PC-9 (cell line): ENCODE measurements at regions of chr11 and their contacts with region 1.

Region 1: GRCh38 chr11:65329944-65330403 is 3.7 kb upstream of the DPF2 start:
- DNase-seq: peak; percentile 75 to 80
- H3K4me3 ChIP-seq: peak overlapping the region; percentile 4; the same call in 1 of the 2 replicates
- H3K27ac ChIP-seq: peak overlapping the region; percentile 26; the same call in 1 of the 2 replicates
- H3K4me1 ChIP-seq: peaks cover 13% of the 10 kb centered on the region
- H3K27me3 ChIP-seq: no peaks in the 10 kb centered on the region
- CTCF ChIP-seq: peak; percentile 94

Region 2: DNA sequence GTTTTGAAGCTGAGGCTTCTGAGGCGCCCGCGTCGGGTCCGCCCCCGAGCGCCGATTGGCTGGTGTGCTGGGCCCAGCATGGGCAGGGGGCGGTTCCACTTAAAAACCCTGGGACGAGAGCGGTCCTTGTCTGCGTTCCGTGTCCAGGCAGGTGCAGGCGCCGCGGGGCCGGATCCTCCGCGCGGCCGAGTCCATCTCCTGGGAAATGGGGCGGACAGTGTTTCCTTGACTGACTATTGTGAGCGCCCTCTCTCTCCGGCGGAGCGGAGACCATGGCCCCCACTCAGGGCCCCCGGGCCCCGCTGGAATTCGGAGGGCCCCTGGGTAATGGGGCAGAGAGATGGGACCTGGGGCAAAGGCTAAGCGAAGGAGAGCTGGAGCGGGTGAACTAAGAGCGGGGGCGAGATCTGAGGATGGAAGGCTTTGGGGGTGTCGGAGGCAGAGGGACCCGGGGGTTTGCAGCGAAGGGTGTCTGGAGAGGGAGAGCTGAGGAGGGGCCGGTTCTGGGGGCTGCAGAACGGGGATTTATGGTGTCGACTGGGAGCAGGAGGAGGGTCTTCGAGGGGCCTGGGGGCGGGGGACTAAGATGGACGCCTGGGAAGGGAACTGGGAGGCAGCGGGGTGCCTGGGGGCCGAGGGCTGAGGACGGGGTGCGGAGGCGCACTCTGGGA is 218.1 kb before region 1 on chr11 and contains the start of gene TM7SF2:
- CTCF ChIA-PET with region 1: no interaction called
- POLR2A ChIA-PET with region 1: no interaction called
- intact Hi-C with region 1: loop called (anchors 5 kb)
- DNase-seq: peak; percentile 92 to 97
- H3K4me3 ChIP-seq: peak within 1 kb of the TSS; percentile 78
- H3K27ac ChIP-seq: no peak within 1 kb of the TSS
- H3K4me1 ChIP-seq: peaks cover 40% of the 10 kb centered on the region
- H3K27me3 ChIP-seq: no peaks in the 10 kb centered on the region
- CTCF ChIP-seq: no peak
- total RNA-seq, gene TM7SF2: 49.5 and 72.3 TPM in 2 replicates

Region 3: GRCh38 chr11:65215441-65216076 is 114.4 kb before region 1 on chr11:
- CTCF ChIA-PET with region 1: interaction called, 12 read pairs
- POLR2A ChIA-PET with region 1: interaction called, 5 read pairs
- intact Hi-C with region 1: no loop called
- DNase-seq: peak in 1 of 2 experiments; percentile 71
- H3K4me3 ChIP-seq: peak overlapping the region; percentile 74
- H3K27ac ChIP-seq: no peak overlapping the region
- H3K4me1 ChIP-seq: peaks cover 45% of the 10 kb centered on the region
- H3K27me3 ChIP-seq: no peaks in the 10 kb centered on the region
- CTCF ChIP-seq: no peak

Region 4: GRCh38 chr11:65290448-65291165 is 39.4 kb before region 1 on chr11:
- CTCF ChIA-PET with region 1: interaction called, 3 read pairs
- POLR2A ChIA-PET with region 1: interaction called, 10 read pairs
- intact Hi-C with region 1: no loop called
- DNase-seq: peak; percentile 32 to 52
- H3K4me3 ChIP-seq: no peak overlapping the region
- H3K27ac ChIP-seq: peak overlapping the region; percentile 92
- H3K4me1 ChIP-seq: peaks cover 34% of the 10 kb centered on the region
- H3K27me3 ChIP-seq: no peaks in the 10 kb centered on the region
- CTCF ChIP-seq: no peak

Region 5: GRCh38 chr11:65354265-65355012 is 24.5 kb after region 1 on chr11 and contains the start of gene TIGD3:
- CTCF ChIA-PET with region 1: interaction called, 3 read pairs
- POLR2A ChIA-PET with region 1: interaction called, 23 read pairs
- intact Hi-C with region 1: no loop called
- DNase-seq: peak; percentile 88 to 99
- H3K4me3 ChIP-seq: peak within 1 kb of the TSS; percentile 87
- H3K27ac ChIP-seq: no peak within 1 kb of the TSS
- H3K4me1 ChIP-seq: peaks cover 11% of the 10 kb centered on the region
- H3K27me3 ChIP-seq: no peaks in the 10 kb centered on the region
- CTCF ChIP-seq: no peak
- total RNA-seq, gene TIGD3: 1.7 and 1.8 TPM in 2 replicates

Region 6: DNA sequence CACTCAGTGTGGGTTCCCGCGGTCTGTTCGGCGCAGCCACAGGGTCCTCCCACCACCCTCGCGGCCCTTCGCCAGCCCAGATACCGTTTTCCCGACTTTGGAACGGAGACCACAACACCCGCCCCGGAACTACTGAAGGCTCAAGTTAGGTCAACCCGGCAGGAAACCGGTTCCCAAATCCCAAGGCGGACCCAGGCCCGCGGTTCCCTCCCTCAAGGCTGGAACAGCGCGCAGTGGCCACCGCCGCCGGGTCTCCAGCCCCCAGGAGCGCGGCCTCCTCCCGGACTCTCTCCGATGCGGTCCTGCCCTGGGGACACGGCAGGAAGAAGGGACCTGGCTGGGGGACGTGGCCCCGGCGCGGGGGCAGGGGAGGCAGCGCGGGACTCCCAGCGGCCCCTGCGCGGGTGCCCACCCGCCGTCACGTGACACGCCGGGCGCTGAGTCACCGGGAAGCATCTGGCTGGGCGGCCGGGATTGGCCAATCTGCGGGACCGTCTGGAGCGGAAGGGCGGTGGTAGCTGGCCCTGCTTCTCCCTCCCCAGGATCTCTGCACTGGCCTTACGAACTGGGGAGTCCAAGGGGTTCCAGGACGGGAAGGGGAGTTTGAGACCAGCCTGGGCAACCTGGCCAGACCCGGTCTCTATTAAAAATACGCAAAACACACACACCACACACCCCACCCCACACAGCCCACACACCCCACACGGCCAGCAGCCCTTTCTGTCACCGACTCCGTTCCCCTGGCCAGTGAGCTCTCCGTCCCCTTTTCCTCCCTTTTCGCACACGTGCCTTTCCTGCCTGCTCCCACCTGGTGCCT is 147.4 kb after region 1 on chr11:
- CTCF ChIA-PET with region 1: no interaction called
- POLR2A ChIA-PET with region 1: interaction called, 15 read pairs
- intact Hi-C with region 1: no loop called
- DNase-seq: peak; percentile 87 to 98
- H3K4me3 ChIP-seq: peak overlapping the region; percentile 74
- H3K27ac ChIP-seq: peak overlapping the region; percentile 88
- H3K4me1 ChIP-seq: peaks cover 61% of the 10 kb centered on the region
- H3K27me3 ChIP-seq: no peaks in the 10 kb centered on the region
- CTCF ChIP-seq: no peak

Region 7: GRCh38 chr11:65530157-65530496 is 200.2 kb after region 1 on chr11:
- CTCF ChIA-PET with region 1: no interaction called
- POLR2A ChIA-PET with region 1: no interaction called
- intact Hi-C with region 1: no loop called
- DNase-seq: no peak
- H3K4me3 ChIP-seq: no peak overlapping the region
- H3K27ac ChIP-seq: no peak overlapping the region
- H3K4me1 ChIP-seq: peaks cover 9% of the 10 kb centered on the region; the same call in 1 of the 2 replicates
- H3K27me3 ChIP-seq: no peaks in the 10 kb centered on the region
- CTCF ChIP-seq: peak; percentile 40; the same call in 1 of the 2 replicates